ENCODE measurements at regions of chr3 and their contacts with region 1.

Region 1: GRCh38 chr3:98593046-98593936 is at the start of gene CPOX:
- DNase-seq: peak; percentile 70
- ATAC-seq: peak; percentile 95
- H3K4me3 Mint-ChIP-seq: peak within 1 kb of the TSS; percentile 97
- H3K27ac Mint-ChIP-seq: peak within 1 kb of the TSS; percentile 91
- H3K4me1 Mint-ChIP-seq: peaks cover 33% of the 10 kb centered on the region
- H3K27me3 Mint-ChIP-seq: no peaks in the 10 kb centered on the region
- CTCF ChIP-seq: no peak
- total RNA-seq, gene CPOX: 17.3 and 17.5 TPM in 2 replicates

Region 2: DNA sequence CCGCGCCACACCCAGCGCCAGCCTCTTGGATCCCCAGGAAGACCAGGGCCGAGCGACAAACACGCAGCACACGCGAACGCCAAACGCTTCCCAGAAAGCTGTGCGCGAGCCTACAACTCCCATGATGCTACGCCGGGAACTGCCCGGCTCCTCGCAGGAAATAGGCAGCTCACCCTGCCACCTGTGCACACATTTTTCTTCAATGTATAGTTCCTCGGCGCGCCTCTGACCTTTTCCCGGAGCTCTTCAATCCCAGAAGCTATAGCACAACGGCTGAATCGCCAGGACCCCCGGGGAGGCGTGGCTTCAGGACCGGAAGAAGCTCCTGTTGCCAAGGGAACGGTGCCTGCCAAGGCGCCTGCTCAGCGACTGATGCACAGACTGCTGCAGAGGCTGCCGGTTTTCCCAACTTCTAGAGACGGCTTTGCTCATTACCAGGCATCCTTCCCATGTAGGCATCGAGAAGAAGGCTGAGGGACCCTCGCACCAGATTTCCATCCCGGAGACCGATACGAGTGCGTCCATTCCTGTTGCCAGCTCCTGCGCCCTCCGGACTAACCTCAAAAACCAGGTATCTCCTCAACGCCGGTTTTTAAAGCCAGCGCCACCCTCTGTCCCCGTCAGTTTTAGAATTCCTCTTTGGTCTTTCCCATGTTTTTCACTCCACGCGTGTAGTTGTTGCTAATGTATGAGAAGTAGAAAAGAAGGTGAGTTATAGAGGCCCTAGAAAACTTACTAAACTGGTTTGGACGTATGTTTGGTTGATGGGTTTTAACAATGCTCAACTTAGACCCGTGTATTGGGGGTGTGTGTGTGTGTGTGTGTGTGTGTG is 828.7 kb before region 1 on chr3 and contains the start of gene ARL6:
- CTCF ChIA-PET with region 1: no interaction called
- POLR2A ChIA-PET with region 1: no interaction called
- intact Hi-C with region 1: loop called (anchors 1 kb)
- DNase-seq: peak; percentile 65
- ATAC-seq: peak; percentile 90
- H3K4me3 Mint-ChIP-seq: peak within 1 kb of the TSS; percentile 99
- H3K27ac Mint-ChIP-seq: peak within 1 kb of the TSS; percentile 95
- H3K4me1 Mint-ChIP-seq: peaks cover 23% of the 10 kb centered on the region
- H3K27me3 Mint-ChIP-seq: no peaks in the 10 kb centered on the region
- CTCF ChIP-seq: no peak
- total RNA-seq, gene ARL6: 2.5 and 4.2 TPM in 2 replicates

Region 3: GRCh38 chr3:98039322-98040024 is 553.8 kb before region 1 on chr3:
- CTCF ChIA-PET with region 1: no interaction called
- POLR2A ChIA-PET with region 1: no interaction called
- intact Hi-C with region 1: loop called (anchors 5 kb)
- DNase-seq: peak; percentile 36
- ATAC-seq: peak; percentile 99
- H3K4me3 Mint-ChIP-seq: peak overlapping the region; percentile 80
- H3K27ac Mint-ChIP-seq: peak overlapping the region; percentile 41
- H3K4me1 Mint-ChIP-seq: peaks cover 5% of the 10 kb centered on the region
- H3K27me3 Mint-ChIP-seq: peaks cover 5% of the 10 kb centered on the region
- CTCF ChIP-seq: peak; percentile 60

Region 4: DNA sequence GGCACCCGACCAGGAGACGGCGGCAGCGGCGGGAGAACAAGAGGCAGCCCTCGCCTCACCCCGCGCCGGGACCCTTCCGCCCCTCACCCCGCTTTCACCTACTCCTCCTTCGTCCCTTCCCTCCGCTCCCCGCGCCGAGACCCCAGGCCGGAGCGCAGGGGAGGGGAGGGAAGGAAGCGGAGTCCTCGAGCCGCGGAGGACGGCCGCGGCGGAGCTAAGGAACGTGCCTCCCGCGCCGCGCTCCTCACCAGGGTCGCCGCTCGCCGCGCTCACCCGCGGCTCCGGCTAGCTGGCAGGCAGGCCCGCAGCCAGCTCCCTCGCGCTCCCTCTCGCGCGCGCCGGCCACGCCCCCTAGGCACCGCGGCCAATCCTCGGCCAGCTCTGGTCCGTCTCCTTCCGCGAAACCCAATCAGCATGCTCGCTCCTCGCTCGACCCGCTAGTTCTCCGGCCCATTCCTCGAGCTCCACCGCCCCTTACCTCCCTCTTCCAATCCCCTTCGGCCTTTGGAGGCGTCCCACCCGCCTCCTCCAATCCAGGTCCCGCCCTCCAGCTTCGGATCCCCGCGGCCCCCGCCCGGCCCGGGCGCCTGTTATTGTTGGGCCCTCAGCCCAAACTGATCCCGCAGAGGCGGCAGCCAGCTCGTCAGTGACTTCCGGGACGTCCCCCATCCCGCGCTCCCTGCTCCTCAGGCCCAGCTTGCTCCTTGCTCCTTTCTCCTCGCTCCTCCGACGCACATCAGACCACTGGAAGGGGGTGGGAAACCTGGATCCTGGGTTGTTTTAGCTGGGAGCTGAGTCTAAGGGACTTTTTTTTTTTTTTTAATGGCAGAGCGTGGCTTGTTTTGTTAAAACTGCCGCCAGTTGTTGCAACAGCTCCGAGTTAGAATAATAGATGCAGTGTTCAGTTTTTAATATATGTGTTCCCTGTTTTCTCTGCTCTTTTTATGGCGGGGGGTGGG is 308.4 kb after region 1 on chr3 and contains the start of gene DCBLD2:
- CTCF ChIA-PET with region 1: no interaction called
- POLR2A ChIA-PET with region 1: interaction called, 3 read pairs
- intact Hi-C with region 1: loop called (anchors 5 kb)
- DNase-seq: peak; percentile 86
- ATAC-seq: peak; percentile 98
- H3K4me3 Mint-ChIP-seq: peak within 1 kb of the TSS; percentile 88
- H3K27ac Mint-ChIP-seq: peak within 1 kb of the TSS; percentile 73
- H3K4me1 Mint-ChIP-seq: peaks cover 19% of the 10 kb centered on the region
- H3K27me3 Mint-ChIP-seq: peaks cover 12% of the 10 kb centered on the region
- CTCF ChIP-seq: no peak
- total RNA-seq, gene DCBLD2: 0.95 and 1.8 TPM in 2 replicates

Region 5: GRCh38 chr3:99753268-99753975 is 1160.1 kb after region 1 on chr3:
- CTCF ChIA-PET with region 1: no interaction called
- POLR2A ChIA-PET with region 1: no interaction called
- intact Hi-C with region 1: loop called (anchors 1 kb)
- DNase-seq: no peak
- ATAC-seq: no peak
- H3K4me3 Mint-ChIP-seq: no peak overlapping the region
- H3K27ac Mint-ChIP-seq: no peak overlapping the region
- H3K4me1 Mint-ChIP-seq: no peaks in the 10 kb centered on the region
- H3K27me3 Mint-ChIP-seq: peaks cover 8% of the 10 kb centered on the region
- CTCF ChIP-seq: no peak

Measured in activated B cell treated with CpG ODN at 0.5 μM for 24 hours (primary cell).